Mammary epithelial cell (primary cell): ENCODE measurements at regions of chr11 and their contacts with region 1.

Region 1: DNA sequence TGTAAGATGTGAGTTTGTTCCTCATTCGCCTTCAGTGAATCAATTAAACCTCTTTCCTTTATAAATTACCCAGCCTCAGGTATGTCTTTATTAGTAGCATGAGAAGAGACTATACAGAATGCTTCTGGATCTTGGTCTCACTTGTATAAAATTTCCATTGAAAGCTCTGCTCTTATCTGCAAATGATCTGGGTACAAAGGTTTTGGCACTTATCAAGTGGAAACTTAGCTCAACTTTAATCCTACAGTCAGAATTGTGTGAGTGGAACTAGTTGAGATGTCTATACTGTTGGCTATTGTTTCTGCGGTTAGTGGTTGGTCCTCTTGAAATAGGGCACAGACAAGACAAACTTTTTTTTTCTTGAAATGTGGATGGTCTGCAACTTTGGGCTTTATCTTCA is 71.2 kb upstream of the CHORDC1 start:
- DNase-seq: no peak
- H3K4me3 ChIP-seq: no peak overlapping the region
- H3K27ac ChIP-seq: no peak overlapping the region
- H3K4me1 ChIP-seq: no peaks in the 10 kb centered on the region
- H3K27me3 ChIP-seq: no peaks in the 10 kb centered on the region
- CTCF ChIP-seq: no peak

Region 2: GRCh38 chr11:90392692-90393091 is 98.6 kb after region 1 on chr11:
- CTCF ChIA-PET with region 1: no interaction called
- dilution Hi-C with region 1: loop called (anchors 5 kb)
- in situ Hi-C with region 1: no loop called
- intact Hi-C with region 1: no loop called
- DNase-seq: no peak
- H3K4me3 ChIP-seq: no peak overlapping the region
- H3K27ac ChIP-seq: no peak overlapping the region
- H3K4me1 ChIP-seq: no peaks in the 10 kb centered on the region
- H3K27me3 ChIP-seq: peaks cover 2% of the 10 kb centered on the region
- CTCF ChIP-seq: peak; percentile 3 to 25